ENCODE measurements at regions of chr11 and their contacts with region 1.

Region 1: GRCh38 chr11:130459521-130459920 is 11.1 kb downstream of the ADAMTS15 start:
- DNase-seq: no peak
- ATAC-seq: no peak

Region 2: DNA sequence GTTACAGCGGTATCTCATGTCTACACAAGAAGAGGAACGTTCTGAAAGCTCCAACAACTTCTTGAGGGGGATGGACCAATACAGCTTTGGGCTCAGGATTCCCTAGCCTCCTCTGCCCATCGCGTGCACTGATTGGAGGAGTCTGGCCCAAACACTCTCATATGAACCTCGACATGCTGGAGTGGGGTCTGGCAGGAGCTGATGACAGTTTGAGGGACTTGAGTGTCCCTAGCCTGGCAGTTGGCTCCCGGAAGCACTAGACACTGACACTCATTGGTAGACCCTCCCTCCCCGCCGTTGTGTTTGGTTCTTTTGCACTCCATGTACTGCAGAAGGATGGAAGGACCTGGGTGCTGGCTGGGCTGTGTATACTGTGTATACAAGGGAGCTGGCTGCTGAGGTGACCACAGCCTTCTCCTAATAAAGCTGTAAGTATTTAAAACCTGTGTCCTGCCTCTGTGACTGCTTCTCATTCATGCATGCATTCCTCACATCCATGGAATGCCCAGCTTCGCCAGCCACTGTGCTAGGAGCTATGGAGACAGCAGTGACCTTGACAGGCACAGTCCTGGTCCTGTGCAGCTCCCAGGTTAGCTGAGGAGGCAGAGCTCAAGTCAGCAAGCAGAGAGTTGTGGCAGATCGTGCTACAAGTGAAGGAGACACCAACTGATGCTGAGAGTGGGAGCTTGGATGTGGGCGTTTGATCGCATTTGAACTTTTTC is 16.8 kb after region 1 on chr11:
- intact Hi-C with region 1: loop called (anchors 1 kb)
- DNase-seq: no peak
- ATAC-seq: no peak

Measured in sciatic nerve (tissue), 2 donors.